ENCODE measurements at regions of chr2 and their contacts with region 1.

Region 1: GRCh38 chr2:68379184-68379708 is 14.2 kb downstream of the PLEK start:
- DNase-seq: peak in 5 of 9 experiments; percentile 18 to 89 (median 35)
- ATAC-seq: peak; percentile 74
- H3K4me3 ChIP-seq: peak overlapping the region in 1 of 2 experiments; percentile 4
- H3K4me3 Mint-ChIP-seq: peak overlapping the region; percentile 32
- H3K27ac ChIP-seq: peak overlapping the region in 1 of 2 experiments; percentile 77
- H3K27ac Mint-ChIP-seq: peak overlapping the region; percentile 65
- H3K4me1 ChIP-seq: peaks cover 31% of the 10 kb centered on the region
- H3K4me1 Mint-ChIP-seq: peaks cover 52% of the 10 kb centered on the region
- H3K27me3 ChIP-seq: no peaks in the 10 kb centered on the region
- H3K27me3 Mint-ChIP-seq: no peaks in the 10 kb centered on the region
- CTCF ChIP-seq: no peak

Region 2: DNA sequence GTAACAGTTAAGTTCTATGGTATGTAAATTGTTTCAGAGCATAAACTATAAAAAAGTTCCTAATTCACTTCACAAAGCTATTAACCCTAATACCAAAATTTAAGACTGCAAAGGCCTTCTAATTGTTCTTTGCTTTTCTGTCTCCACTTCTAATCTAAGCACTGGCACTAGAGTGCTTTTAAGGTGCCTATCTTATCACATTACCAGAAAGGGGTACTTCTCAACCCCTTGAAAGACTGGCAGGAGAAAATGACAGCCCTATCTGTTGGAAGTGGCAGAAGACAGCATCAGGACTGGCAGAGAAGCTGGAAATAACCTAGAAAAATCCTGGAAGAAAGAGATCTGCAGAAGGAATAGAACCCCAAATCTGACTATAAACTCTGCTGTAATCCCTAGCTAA is 69.8 kb before region 1 on chr2:
- CTCF ChIA-PET with region 1: no interaction called
- POLR2A ChIA-PET with region 1: no interaction called
- intact Hi-C with region 1: no loop called
- DNase-seq: no peak
- ATAC-seq: no peak
- H3K4me3 ChIP-seq: no peak overlapping the region
- H3K4me3 Mint-ChIP-seq: no peak overlapping the region
- H3K27ac ChIP-seq: no peak overlapping the region
- H3K27ac Mint-ChIP-seq: no peak overlapping the region
- H3K4me1 ChIP-seq: no peaks in the 10 kb centered on the region
- H3K4me1 Mint-ChIP-seq: no peaks in the 10 kb centered on the region
- H3K27me3 ChIP-seq: no peaks in the 10 kb centered on the region
- H3K27me3 Mint-ChIP-seq: peaks cover 21% of the 10 kb centered on the region
- CTCF ChIP-seq: no peak

Region 3: GRCh38 chr2:68345129-68345875 is 33.9 kb before region 1 on chr2:
- CTCF ChIA-PET with region 1: no interaction called
- POLR2A ChIA-PET with region 1: no interaction called
- intact Hi-C with region 1: no loop called
- DNase-seq: no peak
- ATAC-seq: no peak
- H3K4me3 ChIP-seq: no peak overlapping the region
- H3K4me3 Mint-ChIP-seq: no peak overlapping the region
- H3K27ac ChIP-seq: no peak overlapping the region
- H3K27ac Mint-ChIP-seq: no peak overlapping the region
- H3K4me1 ChIP-seq: no peaks in the 10 kb centered on the region
- H3K4me1 Mint-ChIP-seq: no peaks in the 10 kb centered on the region
- H3K27me3 ChIP-seq: no peaks in the 10 kb centered on the region
- H3K27me3 Mint-ChIP-seq: peaks cover 39% of the 10 kb centered on the region
- CTCF ChIP-seq: no peak

Region 4: DNA sequence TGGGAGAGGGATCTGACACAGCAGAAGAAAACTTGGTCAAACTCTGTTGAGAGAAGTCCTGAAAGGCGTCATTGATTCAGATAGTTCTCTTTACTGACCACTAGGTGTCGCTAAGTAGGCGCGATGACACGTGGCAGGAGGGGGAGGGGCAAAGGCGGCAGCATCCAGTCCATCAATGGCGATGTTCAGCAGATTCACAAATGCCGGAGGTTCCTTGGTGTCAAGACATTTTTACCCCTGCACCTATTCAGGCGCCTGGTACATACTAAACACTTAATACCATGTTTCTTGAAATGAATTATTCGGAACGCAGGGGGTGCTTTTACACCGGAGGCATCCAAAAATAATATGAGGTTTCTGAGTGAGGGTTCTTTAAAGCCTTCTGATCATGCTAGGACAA is 17.2 kb before region 1 on chr2:
- CTCF ChIA-PET with region 1: interaction called, 3 read pairs
- POLR2A ChIA-PET with region 1: no interaction called
- intact Hi-C with region 1: loop called in 1 of 2 experiments (anchors 1 kb)
- DNase-seq: peak; percentile 67 to 92 (median 80)
- ATAC-seq: peak; percentile 90
- H3K4me3 ChIP-seq: peak overlapping the region; percentile 16 to 32
- H3K4me3 Mint-ChIP-seq: peak overlapping the region; percentile 69
- H3K27ac ChIP-seq: peak overlapping the region in 1 of 2 experiments; percentile 72
- H3K27ac Mint-ChIP-seq: peak overlapping the region; percentile 33
- H3K4me1 ChIP-seq: peaks cover 9% of the 10 kb centered on the region
- H3K4me1 Mint-ChIP-seq: peaks cover 25% of the 10 kb centered on the region
- H3K27me3 ChIP-seq: no peaks in the 10 kb centered on the region
- H3K27me3 Mint-ChIP-seq: no peaks in the 10 kb centered on the region
- CTCF ChIP-seq: peak; percentile 73